MCF 10A (cell line): ENCODE measurements at regions of chr3 and their contacts with region 1.

Region 1: GRCh38 chr3:149657926-149658733 is at the start of gene WWTR1:
- DNase-seq: peak; percentile 99
- H3K4me3 Mint-ChIP-seq: peak within 1 kb of the TSS; percentile 100
- H3K27ac Mint-ChIP-seq: peak within 1 kb of the TSS; percentile 99
- H3K4me1 Mint-ChIP-seq: peaks cover 30% of the 10 kb centered on the region
- H3K27me3 Mint-ChIP-seq: no peaks in the 10 kb centered on the region
- CTCF ChIP-seq: peak; percentile 15
- total RNA-seq, gene WWTR1: 52.9 and 54.9 TPM in 2 replicates

Region 2: DNA sequence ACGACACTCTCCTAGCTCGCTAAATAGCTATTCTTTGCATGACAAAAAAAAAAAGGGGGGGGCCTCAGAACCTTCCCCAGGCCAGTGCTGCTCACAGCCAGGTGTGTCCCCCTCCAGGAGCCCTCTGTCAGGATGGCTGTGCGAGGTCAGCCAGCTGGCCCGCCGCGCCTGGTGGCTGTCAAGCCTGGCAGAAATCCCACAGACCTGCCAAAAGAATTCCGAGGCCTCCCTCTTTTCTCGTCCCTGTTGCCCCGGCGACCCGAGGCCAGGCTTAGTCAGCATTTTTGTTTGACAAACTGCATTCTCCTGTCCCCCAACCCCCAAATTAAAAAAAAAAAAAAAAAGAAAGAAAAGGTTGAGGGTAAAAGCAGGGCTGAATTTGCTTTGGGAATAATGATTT is 121.7 kb before region 1 on chr3:
- CTCF ChIA-PET with region 1: interaction called, 32 read pairs
- POLR2A ChIA-PET with region 1: interaction called, 12 read pairs
- intact Hi-C with region 1: no loop called
- DNase-seq: peak; percentile 27
- H3K4me3 Mint-ChIP-seq: peak overlapping the region; percentile 31
- H3K27ac Mint-ChIP-seq: peak overlapping the region; percentile 67
- H3K4me1 Mint-ChIP-seq: peaks cover 48% of the 10 kb centered on the region
- H3K27me3 Mint-ChIP-seq: no peaks in the 10 kb centered on the region
- CTCF ChIP-seq: no peak

Region 3: DNA sequence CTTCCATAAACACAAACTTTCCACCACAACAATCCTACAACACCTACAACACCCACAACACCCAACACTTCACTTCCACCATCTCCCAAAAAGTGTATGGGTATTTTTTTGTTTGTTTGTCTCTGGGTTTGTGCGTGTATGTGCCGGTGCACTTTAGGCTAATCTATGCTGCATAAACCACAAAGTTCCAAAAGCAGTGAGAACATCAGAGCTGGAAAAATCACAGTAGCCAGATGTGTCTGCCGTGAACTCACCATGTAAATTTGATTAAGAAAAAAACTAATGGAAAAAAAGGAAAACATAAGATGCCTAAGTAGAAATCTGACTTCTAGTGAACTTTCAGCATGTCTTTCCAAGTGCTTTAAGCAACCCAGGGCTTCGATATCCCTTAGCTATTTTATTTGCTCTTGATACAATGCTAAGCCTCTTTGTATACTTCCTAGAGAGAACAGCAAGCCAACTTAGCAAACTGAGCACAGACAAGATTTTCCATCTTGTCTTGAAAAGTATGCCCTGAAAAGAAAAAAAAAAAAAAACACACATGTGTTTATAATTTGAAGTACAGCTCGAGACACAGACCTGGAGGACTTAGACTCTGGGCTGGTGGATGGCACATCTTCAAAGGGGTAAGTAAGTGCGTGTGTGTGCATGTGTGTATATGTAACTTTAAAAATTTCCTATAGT is 91.7 kb before region 1 on chr3:
- CTCF ChIA-PET with region 1: interaction called, 51 read pairs
- POLR2A ChIA-PET with region 1: interaction called, 83 read pairs
- intact Hi-C with region 1: loop called (anchors 1 kb)
- DNase-seq: no peak
- H3K4me3 Mint-ChIP-seq: no peak overlapping the region
- H3K27ac Mint-ChIP-seq: no peak overlapping the region
- H3K4me1 Mint-ChIP-seq: peaks cover 10% of the 10 kb centered on the region
- H3K27me3 Mint-ChIP-seq: no peaks in the 10 kb centered on the region
- CTCF ChIP-seq: no peak

Region 4: GRCh38 chr3:149603126-149604074 is 54.7 kb before region 1 on chr3:
- CTCF ChIA-PET with region 1: interaction called, 4 read pairs
- POLR2A ChIA-PET with region 1: interaction called, 15 read pairs
- intact Hi-C with region 1: no loop called
- DNase-seq: peak; percentile 45
- H3K4me3 Mint-ChIP-seq: no peak overlapping the region
- H3K27ac Mint-ChIP-seq: peak overlapping the region; percentile 9
- H3K4me1 Mint-ChIP-seq: peaks cover 35% of the 10 kb centered on the region
- H3K27me3 Mint-ChIP-seq: no peaks in the 10 kb centered on the region
- CTCF ChIP-seq: no peak

Region 5: DNA sequence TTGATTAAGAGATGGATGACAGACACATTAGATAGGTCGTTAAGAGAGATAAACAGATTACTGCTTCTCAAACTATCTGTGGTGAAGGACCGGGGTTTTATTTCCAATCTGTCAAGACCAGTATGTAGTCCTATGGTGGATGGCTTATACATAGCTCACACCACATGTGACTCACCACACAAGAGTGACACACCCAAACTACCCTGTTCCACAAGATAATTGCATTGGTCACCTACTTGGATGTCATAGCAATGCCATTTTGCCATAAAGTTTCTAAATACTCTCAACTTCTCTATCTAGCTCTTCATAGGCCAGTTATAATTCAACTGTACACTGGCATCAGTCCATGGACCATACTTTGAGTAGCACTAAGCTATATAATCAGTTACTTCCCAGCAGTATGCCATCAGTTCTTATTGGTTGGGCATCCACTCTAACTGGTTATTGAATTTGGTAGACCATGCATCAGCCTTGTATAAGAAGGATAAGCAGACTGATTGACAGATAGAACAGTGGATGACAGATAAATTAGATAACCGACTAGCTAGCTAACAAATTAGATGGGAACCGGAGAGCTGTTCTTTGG is 11.9 kb before region 1 on chr3:
- CTCF ChIA-PET with region 1: interaction called, 5 read pairs
- POLR2A ChIA-PET with region 1: interaction called, 65 read pairs
- intact Hi-C with region 1: no loop called
- DNase-seq: peak; percentile 43
- H3K4me3 Mint-ChIP-seq: peak overlapping the region; percentile 5
- H3K27ac Mint-ChIP-seq: peak overlapping the region; percentile 68
- H3K4me1 Mint-ChIP-seq: peaks cover 49% of the 10 kb centered on the region
- H3K27me3 Mint-ChIP-seq: no peaks in the 10 kb centered on the region
- CTCF ChIP-seq: no peak

Region 6: GRCh38 chr3:149752051-149752787 is 94.1 kb after region 1 on chr3 and contains the start of gene COMMD2:
- CTCF ChIA-PET with region 1: interaction called, 6 read pairs
- POLR2A ChIA-PET with region 1: interaction called, 30 read pairs
- intact Hi-C with region 1: no loop called
- DNase-seq: peak; percentile 91
- H3K4me3 Mint-ChIP-seq: peak within 1 kb of the TSS; percentile 84
- H3K27ac Mint-ChIP-seq: peak within 1 kb of the TSS; percentile 87
- H3K4me1 Mint-ChIP-seq: peaks cover 3% of the 10 kb centered on the region
- H3K27me3 Mint-ChIP-seq: no peaks in the 10 kb centered on the region
- CTCF ChIP-seq: peak; percentile 34
- total RNA-seq, gene COMMD2: 51.2 and 60.4 TPM in 2 replicates

Region 7: GRCh38 chr3:149800693-149801092 is 142.6 kb after region 1 on chr3:
- CTCF ChIA-PET with region 1: no interaction called
- POLR2A ChIA-PET with region 1: no interaction called
- intact Hi-C with region 1: no loop called
- DNase-seq: no peak
- H3K4me3 Mint-ChIP-seq: no peak overlapping the region
- H3K27ac Mint-ChIP-seq: no peak overlapping the region
- H3K4me1 Mint-ChIP-seq: no peaks in the 10 kb centered on the region
- H3K27me3 Mint-ChIP-seq: no peaks in the 10 kb centered on the region
- CTCF ChIP-seq: no peak